ENCODE measurements at regions of chr1 and their contacts with region 1.

Region 1: DNA sequence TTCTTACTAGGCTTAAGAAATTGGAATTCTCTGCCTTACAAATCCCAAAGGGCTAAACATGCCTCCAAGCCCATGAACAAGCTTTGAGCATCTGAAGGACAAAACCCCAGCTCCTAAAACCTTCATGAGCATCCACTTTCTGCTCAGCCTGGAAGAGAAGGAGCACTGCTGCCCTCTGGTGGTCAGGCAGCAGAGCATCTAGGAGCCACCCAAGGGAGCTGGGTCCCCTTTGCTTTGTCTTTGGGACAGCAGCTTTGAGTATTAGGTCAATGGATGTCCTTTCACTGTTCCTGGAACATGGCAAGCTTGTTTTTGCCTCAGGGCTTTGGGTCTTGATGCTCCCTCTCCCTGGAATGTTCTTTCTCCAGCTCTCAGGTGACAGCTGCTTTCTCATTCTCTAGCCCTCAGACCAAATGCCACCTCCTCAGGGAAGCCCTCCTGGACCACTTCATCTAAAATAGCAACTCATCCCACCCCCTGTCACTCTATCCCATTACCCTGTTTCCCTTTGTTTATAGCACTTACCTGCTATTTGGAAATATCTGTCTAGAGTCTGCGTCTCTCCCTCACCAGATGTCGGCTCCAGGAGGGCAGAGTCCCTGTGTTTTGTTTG is 25.7 kb downstream of the RAB7B start:
- DNase-seq: peak; percentile 82
- H3K4me3 ChIP-seq: peak overlapping the region in 1 of 2 experiments; percentile 22; a peak in 1 of 4 replicates
- H3K27ac ChIP-seq: no peak overlapping the region
- H3K4me1 ChIP-seq: peaks cover 0 to 12% of the 10 kb centered on the region in 2 experiments; a peak in 1 of 4 replicates
- H3K27me3 ChIP-seq: no peaks in the 10 kb centered on the region
- CTCF ChIP-seq: peak; percentile 97
- EP300 ChIP-seq: no peak
- RAD21 ChIP-seq: peak; percentile 96

Region 2: DNA sequence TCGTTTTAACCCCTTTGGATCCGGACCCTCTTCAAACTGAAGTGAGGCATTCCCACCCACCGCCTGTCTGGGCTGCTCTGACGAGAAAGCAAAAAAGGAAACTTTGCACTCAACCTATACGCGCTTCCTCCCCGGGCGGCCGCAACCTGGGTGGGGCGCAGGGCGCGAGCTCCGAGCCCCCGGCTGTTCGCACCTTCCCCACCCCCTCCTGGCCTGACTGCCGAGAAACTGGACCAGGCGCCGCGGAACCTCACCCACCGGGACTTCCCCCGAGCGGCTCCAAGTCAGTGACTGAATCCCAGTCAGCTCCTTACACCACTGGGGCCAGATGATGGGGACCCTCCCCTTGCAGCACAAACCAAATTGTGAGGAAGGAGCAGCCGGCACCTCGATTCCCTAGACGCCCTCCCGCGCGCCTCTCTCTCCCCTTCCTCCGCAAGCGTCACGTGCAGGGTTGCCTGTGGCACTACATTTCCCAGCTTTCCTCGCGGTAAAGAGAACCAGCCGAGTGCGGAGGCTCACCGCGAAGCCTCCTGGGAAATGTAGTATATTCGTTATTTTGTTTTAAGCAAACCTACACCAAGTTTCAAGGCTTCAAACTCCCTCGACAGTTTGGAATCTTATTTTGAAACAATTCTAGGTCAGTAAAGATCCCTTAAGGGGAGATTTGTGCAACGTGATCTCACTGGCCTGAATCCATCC is 202.3 kb before region 1 on chr1 and contains the start of gene RAB29:
- CTCF ChIA-PET with region 1: interaction called, 24 read pairs
- POLR2A ChIA-PET with region 1: no interaction called
- DNase-seq: peak; percentile 82
- H3K4me3 ChIP-seq: peak within 1 kb of the TSS; percentile 88 to 94
- H3K27ac ChIP-seq: no peak within 1 kb of the TSS; a peak in 1 of 4 replicates
- H3K4me1 ChIP-seq: peaks cover 0 to 6% of the 10 kb centered on the region in 2 experiments; a peak in 1 of 4 replicates
- H3K27me3 ChIP-seq: no peaks in the 10 kb centered on the region; the same call in 1 of the 2 replicates
- CTCF ChIP-seq: no peak
- EP300 ChIP-seq: no peak
- RAD21 ChIP-seq: no peak
- polyA plus RNA-seq, gene RAB29: 9.2 and 9.8 TPM in 2 replicates

Region 3: GRCh38 chr1:205812878-205813754 is 164.4 kb before region 1 on chr1 and contains the start of gene SLC41A1:
- CTCF ChIA-PET with region 1: interaction called, 29 read pairs
- POLR2A ChIA-PET with region 1: no interaction called
- DNase-seq: peak; percentile 100
- H3K4me3 ChIP-seq: peak within 1 kb of the TSS; percentile 77 to 94
- H3K27ac ChIP-seq: peak within 1 kb of the TSS; percentile 46 to 84
- H3K4me1 ChIP-seq: peaks cover 5 to 38% of the 10 kb centered on the region in 2 experiments; a peak in 2 of 4 replicates
- H3K27me3 ChIP-seq: no peaks in the 10 kb centered on the region
- CTCF ChIP-seq: no peak
- EP300 ChIP-seq: no peak
- RAD21 ChIP-seq: no peak
- polyA plus RNA-seq, gene SLC41A1: 18.3 and 25.1 TPM in 2 replicates

Region 4: GRCh38 chr1:205907794-205908193 is 69.7 kb before region 1 on chr1:
- CTCF ChIA-PET with region 1: interaction called, 64 read pairs
- POLR2A ChIA-PET with region 1: no interaction called
- DNase-seq: peak; percentile 20
- H3K4me3 ChIP-seq: no peak overlapping the region
- H3K27ac ChIP-seq: no peak overlapping the region
- H3K4me1 ChIP-seq: no peaks in the 10 kb centered on the region
- H3K27me3 ChIP-seq: no peaks in the 10 kb centered on the region
- CTCF ChIP-seq: peak; percentile 68
- EP300 ChIP-seq: no peak
- RAD21 ChIP-seq: peak; percentile 67

Region 5: DNA sequence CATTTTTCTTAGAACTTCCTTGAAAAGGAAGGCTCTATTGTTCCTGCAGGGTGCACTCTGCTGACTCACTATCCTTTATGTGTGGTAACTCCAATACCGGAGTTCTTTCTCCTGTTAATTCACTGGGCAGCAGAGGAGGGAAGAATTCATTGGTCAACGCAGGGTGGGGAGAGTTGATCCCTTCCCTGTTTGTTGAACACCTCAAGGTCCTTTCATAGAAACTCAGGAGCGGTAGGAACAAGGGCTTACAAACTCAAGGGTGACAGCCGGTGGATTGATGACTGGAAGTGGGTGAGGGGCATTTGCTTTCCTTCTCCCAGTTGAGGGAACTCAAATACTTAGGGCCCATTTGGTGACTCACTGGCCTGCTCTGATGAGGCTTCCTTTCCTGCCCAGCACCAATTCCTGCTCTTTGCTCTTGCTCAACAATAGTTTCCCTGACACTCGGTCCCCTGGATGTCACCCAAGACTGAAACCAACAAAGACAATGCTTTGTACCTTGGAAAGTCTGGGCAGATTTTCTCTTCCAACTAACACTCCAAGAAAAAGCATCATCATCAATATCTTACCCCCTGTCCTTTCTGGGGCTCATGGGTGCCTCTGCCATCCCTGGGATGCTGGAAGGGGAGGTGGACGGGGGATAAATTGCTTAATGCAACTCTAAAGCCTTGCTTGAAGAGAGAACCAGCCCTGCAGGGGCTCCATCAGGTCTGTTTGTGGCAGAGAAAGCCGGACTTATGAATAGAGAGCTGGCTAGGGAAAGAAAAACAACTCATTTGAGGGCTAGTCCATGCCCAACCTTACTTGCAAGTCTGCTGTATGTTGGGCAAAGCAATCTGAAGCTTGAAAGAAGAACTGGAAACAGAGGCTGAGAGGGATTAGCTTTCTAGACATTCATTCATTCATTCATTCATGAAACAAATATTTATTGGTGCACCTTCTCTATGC is 43.6 kb before region 1 on chr1:
- CTCF ChIA-PET with region 1: interaction called, 16 read pairs
- POLR2A ChIA-PET with region 1: no interaction called
- DNase-seq: no peak
- H3K4me3 ChIP-seq: no peak overlapping the region
- H3K27ac ChIP-seq: peak overlapping the region in 1 of 2 experiments; percentile 12; a peak in 1 of 4 replicates
- H3K4me1 ChIP-seq: peaks cover 0 to 11% of the 10 kb centered on the region in 2 experiments; a peak in 2 of 4 replicates
- H3K27me3 ChIP-seq: 0 out of 2 replicates have a peak, but pooled peaks cover 6% of the 10 kb centered on the region
- CTCF ChIP-seq: no peak
- EP300 ChIP-seq: no peak
- RAD21 ChIP-seq: no peak

Region 6: DNA sequence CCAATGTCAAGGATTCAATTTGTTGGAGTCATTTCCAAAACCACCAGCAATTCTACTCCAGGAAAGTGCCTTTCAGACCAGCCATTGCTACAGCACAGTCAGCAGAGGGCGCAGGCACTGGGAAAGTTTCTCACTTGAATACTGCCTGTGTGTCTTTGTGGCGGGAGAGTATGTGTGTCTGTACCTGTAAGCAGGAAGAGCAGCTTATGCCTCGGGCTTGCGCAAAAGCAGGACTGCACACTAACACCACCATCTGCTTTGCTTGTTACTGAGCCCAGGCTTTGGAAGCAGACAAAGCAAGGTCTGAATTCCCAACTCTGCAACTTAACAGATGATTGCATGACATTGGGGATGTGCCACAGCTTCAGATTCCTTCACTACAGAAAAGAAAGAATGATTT is 53.2 kb after region 1 on chr1:
- CTCF ChIA-PET with region 1: interaction called, 35 read pairs
- POLR2A ChIA-PET with region 1: no interaction called
- DNase-seq: peak; percentile 59
- H3K4me3 ChIP-seq: peak overlapping the region in 1 of 2 experiments; percentile 8; a peak in 1 of 4 replicates
- H3K27ac ChIP-seq: no peak overlapping the region
- H3K4me1 ChIP-seq: peaks cover 0 to 2% of the 10 kb centered on the region in 2 experiments; a peak in 1 of 4 replicates
- H3K27me3 ChIP-seq: peaks cover 16% of the 10 kb centered on the region; the same call in 1 of the 2 replicates
- CTCF ChIP-seq: peak; percentile 82
- EP300 ChIP-seq: no peak
- RAD21 ChIP-seq: peak; percentile 82

Region 7: GRCh38 chr1:207172885-207173284 is 1195.4 kb after region 1 on chr1:
- CTCF ChIA-PET with region 1: no interaction called
- POLR2A ChIA-PET with region 1: no interaction called
- DNase-seq: no peak
- H3K4me3 ChIP-seq: no peak overlapping the region
- H3K27ac ChIP-seq: no peak overlapping the region
- H3K4me1 ChIP-seq: no peaks in the 10 kb centered on the region
- H3K27me3 ChIP-seq: no peaks in the 10 kb centered on the region
- CTCF ChIP-seq: no peak
- EP300 ChIP-seq: no peak
- RAD21 ChIP-seq: no peak

Measured in SK-N-SH (cell line).